ENCODE measurements at regions of chr16 and their contacts with region 1.

Region 1: GRCh38 chr16:67480833-67481560 is at the start of gene ATP6V0D1:
- DNase-seq: peak; percentile 98 to 100
- H3K4me3 ChIP-seq: peak within 1 kb of the TSS; percentile 94
- H3K4me3 Mint-ChIP-seq: peak within 1 kb of the TSS; percentile 98
- H3K27ac Mint-ChIP-seq: peak within 1 kb of the TSS; percentile 94
- H3K4me1 ChIP-seq: peaks cover 15% of the 10 kb centered on the region
- H3K4me1 Mint-ChIP-seq: peaks cover 19% of the 10 kb centered on the region
- H3K27me3 ChIP-seq: no peaks in the 10 kb centered on the region
- H3K27me3 Mint-ChIP-seq: no peaks in the 10 kb centered on the region
- CTCF ChIP-seq: peak; percentile 89 to 96
- total RNA-seq, gene ATP6V0D1: 107 and 110 TPM in 2 replicates

Region 2: DNA sequence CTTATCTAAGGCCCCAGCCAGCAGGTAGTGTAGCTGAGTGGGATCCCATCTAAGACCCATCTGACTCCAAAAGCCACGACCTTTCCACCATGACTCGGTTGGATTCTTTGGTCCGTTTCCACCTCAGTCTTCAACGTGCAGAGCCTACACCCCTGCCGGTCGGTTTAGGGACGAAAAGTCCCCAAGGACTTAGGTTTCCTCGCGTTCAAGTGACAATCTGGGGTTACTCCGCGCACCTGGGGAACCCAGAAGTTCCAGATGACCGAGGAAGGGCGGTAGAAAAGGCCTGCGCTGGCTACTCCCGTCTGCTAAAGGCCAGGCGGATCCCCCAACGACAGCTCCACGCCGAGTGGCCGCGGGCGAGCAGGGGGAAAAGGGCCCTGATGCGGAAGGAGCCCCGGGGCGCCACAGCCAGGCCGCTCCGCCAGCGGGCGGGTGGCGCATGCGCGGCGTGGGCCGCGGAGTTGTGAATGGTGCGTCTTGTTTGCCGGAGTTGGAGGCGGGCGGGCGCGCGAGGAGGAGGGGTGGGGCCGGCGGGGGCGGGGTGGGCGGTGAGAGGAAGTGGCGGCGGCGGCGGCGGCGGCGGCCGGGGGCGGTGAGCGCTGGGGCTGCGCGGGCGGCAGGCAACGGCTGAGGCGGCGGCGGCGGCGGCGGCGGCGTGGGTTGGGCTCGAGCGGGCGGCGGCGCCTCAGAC is 452.3 kb before region 1 on chr16 and contains the start of gene CBFB:
- CTCF ChIA-PET with region 1: no interaction called
- POLR2A ChIA-PET with region 1: interaction called, 11 read pairs
- intact Hi-C with region 1: no loop called
- DNase-seq: peak; percentile 96 to 98
- H3K4me3 ChIP-seq: peak within 1 kb of the TSS; percentile 91
- H3K4me3 Mint-ChIP-seq: peak within 1 kb of the TSS; percentile 80
- H3K27ac Mint-ChIP-seq: peak within 1 kb of the TSS; percentile 90
- H3K4me1 ChIP-seq: peaks cover 24% of the 10 kb centered on the region
- H3K4me1 Mint-ChIP-seq: peaks cover 26% of the 10 kb centered on the region
- H3K27me3 ChIP-seq: no peaks in the 10 kb centered on the region
- H3K27me3 Mint-ChIP-seq: no peaks in the 10 kb centered on the region
- CTCF ChIP-seq: peak; percentile 30 to 49
- total RNA-seq, gene CBFB: 102 and 108 TPM in 2 replicates

Region 3: DNA sequence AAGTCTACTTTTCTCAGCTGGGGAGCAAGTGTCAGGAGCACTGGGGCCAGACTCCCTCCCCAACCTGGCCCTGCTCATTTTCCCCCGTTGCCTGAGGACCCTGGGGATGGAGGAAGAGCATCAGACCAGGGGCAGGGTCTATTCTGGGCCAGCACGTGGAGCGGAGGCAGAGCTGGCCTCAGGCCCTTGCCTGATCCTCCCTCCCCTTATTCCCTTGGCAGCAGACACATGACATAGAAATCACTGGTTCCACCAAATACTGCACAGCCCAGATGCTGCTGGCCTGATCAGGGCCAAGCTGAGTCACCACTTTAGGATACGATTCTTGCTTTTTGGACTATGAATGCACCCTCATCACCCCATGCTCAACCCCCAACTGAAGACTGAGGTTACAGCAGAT is 18.1 kb after region 1 on chr16:
- CTCF ChIA-PET with region 1: interaction called, 9 read pairs
- POLR2A ChIA-PET with region 1: no interaction called
- intact Hi-C with region 1: loop called (anchors 1 kb)
- DNase-seq: no peak
- H3K4me3 ChIP-seq: no peak overlapping the region
- H3K4me3 Mint-ChIP-seq: no peak overlapping the region
- H3K27ac Mint-ChIP-seq: no peak overlapping the region
- H3K4me1 ChIP-seq: no peaks in the 10 kb centered on the region
- H3K4me1 Mint-ChIP-seq: no peaks in the 10 kb centered on the region
- H3K27me3 ChIP-seq: no peaks in the 10 kb centered on the region
- H3K27me3 Mint-ChIP-seq: no peaks in the 10 kb centered on the region
- CTCF ChIP-seq: no peak

Measured in Caco-2 (cell line).